Cardiac septum (tissue), 1 donor: ENCODE measurements at regions of chr11 and their contacts with region 1.

Region 1: DNA sequence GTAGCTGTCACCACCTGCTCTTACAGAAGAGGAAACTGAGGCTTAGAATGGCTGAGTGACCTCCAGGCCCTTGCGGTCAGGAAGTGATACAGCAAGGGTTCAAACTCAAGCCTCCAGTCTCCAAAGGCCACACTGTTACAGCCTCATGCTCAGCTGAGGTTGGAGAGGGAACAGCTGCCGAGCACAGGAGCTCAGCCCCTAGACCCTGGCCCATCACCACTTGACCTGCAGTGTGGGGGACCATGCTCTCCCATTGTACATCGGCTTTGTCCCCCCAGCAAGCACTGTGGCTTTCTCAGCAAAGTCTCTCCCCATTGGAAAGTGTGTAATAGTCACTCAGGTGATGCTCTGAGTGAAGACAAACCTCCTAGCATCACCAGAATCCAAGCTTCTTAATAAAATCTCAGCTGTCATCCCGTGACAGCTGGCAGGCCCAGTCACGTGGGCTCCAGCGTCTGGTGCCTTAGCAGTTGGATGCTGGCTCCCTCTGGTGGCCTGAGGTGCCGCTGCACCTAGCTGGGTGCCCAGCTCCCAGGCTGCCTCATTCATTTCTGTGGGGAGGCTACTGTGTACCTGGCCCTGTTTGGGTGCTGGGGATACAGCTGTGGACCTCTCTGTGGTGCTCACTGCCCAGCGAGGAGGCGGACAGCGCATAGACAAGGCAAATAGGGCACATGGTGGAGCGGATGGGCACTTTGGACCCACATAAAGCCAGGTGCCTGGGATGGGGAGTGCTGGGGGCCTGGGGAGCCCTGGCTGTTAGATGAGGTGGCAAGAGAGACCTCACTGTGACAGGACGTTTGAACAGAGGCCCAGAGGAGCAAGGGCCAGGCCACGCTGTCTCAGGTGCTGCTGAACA is 19.1 kb upstream of the MYRF start:
- DNase-seq: peak; percentile 92

Region 2: DNA sequence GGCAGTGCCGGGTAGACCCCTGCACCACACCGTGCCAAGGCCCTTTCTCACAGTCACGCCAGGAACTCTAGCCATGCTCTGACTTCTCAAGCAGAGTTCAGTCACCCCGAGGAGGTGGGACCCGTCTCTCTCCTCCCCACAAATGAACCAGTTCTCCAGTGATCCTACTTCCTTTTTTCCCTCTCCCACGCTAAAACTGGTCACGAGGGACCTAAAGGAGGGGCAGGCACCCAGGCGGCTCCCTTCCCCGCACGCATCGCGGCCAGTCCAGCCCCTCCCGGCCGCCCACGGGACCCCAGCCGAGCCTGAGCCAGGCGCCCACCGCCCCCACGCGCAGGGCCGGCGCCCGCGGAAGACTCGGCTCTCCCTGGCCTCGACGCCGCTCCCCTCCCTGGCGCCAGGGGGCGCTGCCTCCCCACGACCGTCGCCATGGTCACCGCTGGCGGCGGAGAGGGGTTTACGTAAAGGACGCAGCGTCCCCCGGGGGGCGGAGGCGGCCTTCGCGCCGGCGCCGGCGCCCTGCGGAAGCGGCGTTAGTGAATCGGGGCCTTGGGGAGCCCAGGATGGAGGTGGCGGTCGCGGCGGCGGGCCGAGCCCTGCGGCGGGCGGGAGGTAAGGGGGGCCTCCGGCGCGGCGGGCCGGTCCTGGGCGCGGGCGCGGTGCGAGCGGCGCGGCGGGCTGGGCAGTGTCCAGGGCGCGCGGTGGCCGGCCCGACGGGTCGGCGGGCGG is 53.3 kb before region 1 on chr11 and contains the start of gene DAGLA:
- intact Hi-C with region 1: loop called (anchors 1 kb)
- DNase-seq: peak; percentile 89
- total RNA-seq, gene DAGLA: 3.3 TPM

Region 3: GRCh38 chr11:61695917-61696316 is 37.4 kb before region 1 on chr11:
- intact Hi-C with region 1: loop called (anchors 5 kb)
- DNase-seq: peak; percentile 86